ENCODE measurements at regions of chr22 and their contacts with region 1.

Region 1: GRCh38 chr22:39236321-39237317 is 8.2 kb downstream of the PDGFB start:
- DNase-seq: no peak
- H3K4me3 ChIP-seq: no peak overlapping the region
- CTCF ChIP-seq: no peak
- POLR2A ChIP-seq: no peak

Region 2: DNA sequence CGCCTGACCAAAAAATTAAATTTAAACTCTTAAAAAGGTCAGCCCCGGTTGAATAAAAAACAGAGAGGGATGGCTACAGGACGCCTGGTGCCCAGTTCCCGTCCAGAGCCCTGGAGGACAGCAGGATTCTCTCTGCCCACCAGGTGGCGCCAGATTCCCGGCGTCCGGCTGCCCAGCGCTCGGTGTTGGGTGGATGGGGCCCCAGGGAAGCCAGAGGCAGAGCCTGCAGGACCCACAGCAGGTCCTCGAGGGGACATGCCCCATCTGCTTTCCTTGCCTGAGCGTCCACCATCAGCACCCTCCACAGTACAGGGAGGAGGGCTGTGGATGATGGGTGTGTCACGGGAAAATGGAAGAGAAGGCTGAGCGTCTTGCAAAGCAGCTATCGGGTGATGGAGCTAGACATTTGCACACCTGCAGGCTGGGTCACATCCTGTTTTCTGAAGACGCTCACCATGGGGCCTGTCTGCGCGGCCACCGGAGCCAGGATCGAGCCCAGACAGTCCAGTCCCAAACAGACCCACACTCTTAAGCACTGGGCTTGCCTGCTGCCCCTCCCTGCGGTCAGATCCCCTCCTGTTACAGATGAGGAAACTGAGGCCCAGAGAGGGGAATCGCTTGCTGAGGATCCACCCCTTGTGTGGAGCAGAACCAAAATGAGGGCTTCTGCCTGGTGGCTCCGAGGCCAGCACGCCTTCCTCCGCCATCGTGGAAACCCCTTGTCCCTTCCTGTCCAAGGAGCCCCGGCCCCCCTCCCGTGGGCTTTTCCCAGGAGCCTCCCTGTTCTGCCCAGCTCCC is 65.6 kb before region 1 on chr22:
- intact Hi-C with region 1: loop called (anchors 10 kb)
- DNase-seq: peak; percentile 70 to 97
- H3K4me3 ChIP-seq: no peak overlapping the region
- CTCF ChIP-seq: peak in 2 of 3 donors; percentile 62 to 89
- POLR2A ChIP-seq: no peak

Region 3: GRCh38 chr22:39215426-39216120 is 21.0 kb before region 1 on chr22:
- intact Hi-C with region 1: no loop called
- DNase-seq: peak in 1 of 2 donors; percentile 80
- H3K4me3 ChIP-seq: no peak overlapping the region
- CTCF ChIP-seq: no peak
- POLR2A ChIP-seq: no peak

Region 4: GRCh38 chr22:39309881-39310714 is 73.5 kb after region 1 on chr22:
- intact Hi-C with region 1: loop called (anchors 5 kb)
- DNase-seq: no peak
- H3K4me3 ChIP-seq: no peak overlapping the region
- CTCF ChIP-seq: no peak
- POLR2A ChIP-seq: no peak

Measured in lower leg skin (tissue), 4 donors.